ENCODE measurements at regions of chr22 and their contacts with region 1.

Region 1: DNA sequence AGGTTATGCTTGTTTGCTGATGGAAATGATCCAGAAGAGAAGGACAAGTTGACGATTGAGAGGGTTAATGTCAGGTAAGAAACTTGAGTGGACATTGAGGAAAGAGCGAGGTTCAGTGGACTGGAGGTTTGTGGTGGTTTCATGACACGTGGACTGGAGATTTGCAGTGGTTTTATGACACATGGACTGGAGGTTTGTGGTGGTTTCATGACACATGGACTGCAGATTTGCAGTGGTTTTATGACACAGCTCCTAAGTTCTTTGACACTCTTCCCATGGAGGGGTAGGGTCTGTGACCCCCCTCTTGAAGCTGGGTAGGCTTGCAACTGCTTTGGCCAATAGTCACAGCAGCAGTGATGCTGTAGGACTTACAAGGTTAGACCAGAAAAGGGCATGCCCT is 5.4 kb upstream of the MAPK8IP2 start:
- DNase-seq: no peak
- ATAC-seq: no peak
- H3K4me3 ChIP-seq: no peak overlapping the region
- H3K4me3 Mint-ChIP-seq: no peak overlapping the region
- H3K27ac ChIP-seq: no peak overlapping the region
- H3K27ac Mint-ChIP-seq: no peak overlapping the region
- H3K4me1 ChIP-seq: peaks cover 0 to 4% of the 10 kb centered on the region in 2 experiments
- H3K4me1 Mint-ChIP-seq: peaks cover 5 to 6% (median 5%) of the 10 kb centered on the region in 3 donors
- H3K27me3 ChIP-seq: peaks cover 0 to 25% of the 10 kb centered on the region in 2 experiments
- H3K27me3 Mint-ChIP-seq: peaks cover 4 to 16% of the 10 kb centered on the region in 2 donors

Region 2: DNA sequence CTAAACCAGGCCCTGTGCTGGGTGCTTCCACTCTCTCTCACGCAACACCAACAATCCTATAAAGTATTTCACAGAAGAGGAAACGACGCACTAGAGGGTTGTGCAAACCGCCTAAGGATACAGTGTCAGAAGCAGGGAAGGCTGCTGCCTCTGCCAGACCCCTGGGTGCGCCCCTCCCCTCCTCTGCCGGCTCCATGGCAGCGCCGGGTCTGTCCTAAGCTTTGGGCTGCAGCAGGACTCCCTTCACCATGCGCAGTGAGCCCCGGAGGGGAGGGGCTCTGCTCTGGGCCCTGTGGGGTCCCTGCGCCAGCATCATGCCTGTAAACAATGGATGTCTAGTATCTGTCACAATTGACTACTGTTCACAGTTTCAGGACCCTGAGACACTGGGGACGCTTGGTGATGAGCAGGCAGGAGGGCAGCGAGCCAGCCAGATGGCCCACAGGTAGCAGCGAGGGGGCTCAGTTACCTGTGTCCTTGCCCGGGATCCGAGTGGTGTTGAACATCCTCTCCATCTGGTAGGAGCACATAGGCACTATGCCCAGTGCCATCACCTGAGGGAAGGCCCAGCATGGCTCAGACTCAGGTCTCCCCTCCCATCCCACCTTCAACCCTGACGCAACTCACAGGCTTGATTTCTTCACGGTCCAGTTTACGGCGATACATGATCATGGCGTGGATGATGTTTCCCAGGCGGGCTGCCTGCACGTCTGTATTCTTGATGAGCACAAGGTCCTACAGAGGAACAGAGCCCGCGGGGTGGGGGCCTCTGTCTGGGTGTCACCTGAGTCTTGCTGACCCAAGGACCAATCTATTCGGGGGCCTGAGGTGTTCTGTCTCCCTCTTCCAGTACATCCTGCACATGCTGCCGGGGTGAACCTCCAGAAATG is 21.1 kb before region 1 on chr22:
- CTCF ChIA-PET with region 1: interaction called in 1 of 2 experiments, 3 read pairs
- POLR2A ChIA-PET with region 1: interaction called in 1 of 2 experiments, 11 read pairs
- DNase-seq: no peak
- ATAC-seq: no peak
- H3K4me3 ChIP-seq: no peak overlapping the region
- H3K4me3 Mint-ChIP-seq: no peak overlapping the region
- H3K27ac ChIP-seq: no peak overlapping the region
- H3K27ac Mint-ChIP-seq: no peak overlapping the region
- H3K4me1 ChIP-seq: peaks cover 0 to 15% of the 10 kb centered on the region in 2 experiments
- H3K4me1 Mint-ChIP-seq: peaks cover 7 to 8% (median 7%) of the 10 kb centered on the region in 3 donors
- H3K27me3 ChIP-seq: no peaks in the 10 kb centered on the region
- H3K27me3 Mint-ChIP-seq: no peaks in the 10 kb centered on the region

Region 3: GRCh38 chr22:50620593-50621355 is 25.6 kb after region 1 on chr22:
- CTCF ChIA-PET with region 1: no interaction called
- POLR2A ChIA-PET with region 1: no interaction called
- DNase-seq: peak; percentile 44 to 97 (median 91)
- ATAC-seq: peak; percentile 67 to 77 (median 73)
- H3K4me3 ChIP-seq: peak overlapping the region; percentile 60 to 77
- H3K4me3 Mint-ChIP-seq: peak overlapping the region; percentile 88 to 90 (median 90)
- H3K27ac ChIP-seq: peak overlapping the region; percentile 96
- H3K27ac Mint-ChIP-seq: peak overlapping the region; percentile 97 to 99
- H3K4me1 ChIP-seq: peaks cover 26 to 40% of the 10 kb centered on the region in 2 experiments
- H3K4me1 Mint-ChIP-seq: peaks cover 36 to 40% (median 39%) of the 10 kb centered on the region in 3 donors
- H3K27me3 ChIP-seq: no peaks in the 10 kb centered on the region
- H3K27me3 Mint-ChIP-seq: no peaks in the 10 kb centered on the region

Measured in T-cell (primary cell).